ENCODE measurements at regions of chr15 and their contacts with region 1.

Region 1: GRCh38 chr15:67150028-67150860 is 84.8 kb downstream of the SMAD3 start:
- DNase-seq: peak; percentile 62 to 94
- H3K4me3 ChIP-seq: peak overlapping the region in 1 of 2 donors; percentile 22
- H3K27ac ChIP-seq: peak overlapping the region; percentile 86 to 89
- H3K4me1 ChIP-seq: peaks cover 18 to 49% of the 10 kb centered on the region in 2 donors
- H3K27me3 ChIP-seq: no peaks in the 10 kb centered on the region
- CTCF ChIP-seq: no peak

Region 2: GRCh38 chr15:66883322-66883911 is 266.8 kb before region 1 on chr15:
- intact Hi-C with region 1: loop called (anchors 2 kb)
- DNase-seq: peak; percentile 80 to 99
- H3K4me3 ChIP-seq: no peak overlapping the region
- H3K27ac ChIP-seq: peak overlapping the region; percentile 63 to 73
- H3K4me1 ChIP-seq: peaks cover 6 to 27% of the 10 kb centered on the region in 2 donors
- H3K27me3 ChIP-seq: no peaks in the 10 kb centered on the region
- CTCF ChIP-seq: no peak

Region 3: GRCh38 chr15:67065444-67066093 is 84.7 kb before region 1 on chr15 and contains the start of gene SMAD3:
- intact Hi-C with region 1: loop called (anchors 5 kb)
- DNase-seq: peak; percentile 57 to 94
- H3K4me3 ChIP-seq: peak within 1 kb of the TSS; percentile 85 to 94
- H3K27ac ChIP-seq: peak within 1 kb of the TSS; percentile 96
- H3K4me1 ChIP-seq: peaks cover 8 to 19% of the 10 kb centered on the region in 2 donors
- H3K27me3 ChIP-seq: no peaks in the 10 kb centered on the region
- CTCF ChIP-seq: no peak
- total RNA-seq, gene SMAD3: 89.3 TPM

Region 4: GRCh38 chr15:67080900-67081431 is 69.3 kb before region 1 on chr15:
- intact Hi-C with region 1: loop called (anchors 2 kb)
- DNase-seq: peak; percentile 39 to 83
- H3K4me3 ChIP-seq: peak overlapping the region in 1 of 2 donors; percentile 40
- H3K27ac ChIP-seq: peak overlapping the region; percentile 65 to 67
- H3K4me1 ChIP-seq: peaks cover 23 to 68% of the 10 kb centered on the region in 2 donors
- H3K27me3 ChIP-seq: no peaks in the 10 kb centered on the region
- CTCF ChIP-seq: no peak

Region 5: GRCh38 chr15:67120839-67121643 is 29.2 kb before region 1 on chr15:
- intact Hi-C with region 1: loop called (anchors 1 kb)
- DNase-seq: peak; percentile 93 to 96
- H3K4me3 ChIP-seq: peak overlapping the region; percentile 29 to 41
- H3K27ac ChIP-seq: peak overlapping the region; percentile 81 to 92
- H3K4me1 ChIP-seq: peaks cover 22 to 73% of the 10 kb centered on the region in 2 donors
- H3K27me3 ChIP-seq: no peaks in the 10 kb centered on the region
- CTCF ChIP-seq: no peak

Region 6: GRCh38 chr15:67165254-67166253 is 15.3 kb after region 1 on chr15:
- intact Hi-C with region 1: loop called (anchors 1 kb)
- DNase-seq: peak in 1 of 2 donors; percentile 84
- H3K4me3 ChIP-seq: peak overlapping the region in 1 of 2 donors; percentile 28
- H3K27ac ChIP-seq: peak overlapping the region; percentile 70 to 73
- H3K4me1 ChIP-seq: peaks cover 12 to 43% of the 10 kb centered on the region in 2 donors
- H3K27me3 ChIP-seq: no peaks in the 10 kb centered on the region
- CTCF ChIP-seq: no peak

Region 7: GRCh38 chr15:67188551-67189218 is 38.4 kb after region 1 on chr15:
- intact Hi-C with region 1: loop called (anchors 1 kb)
- DNase-seq: no peak
- H3K4me3 ChIP-seq: no peak overlapping the region
- H3K27ac ChIP-seq: peak overlapping the region; percentile 92 to 95
- H3K4me1 ChIP-seq: peaks cover 30 to 47% of the 10 kb centered on the region in 2 donors
- H3K27me3 ChIP-seq: no peaks in the 10 kb centered on the region
- CTCF ChIP-seq: no peak

Region 8: DNA sequence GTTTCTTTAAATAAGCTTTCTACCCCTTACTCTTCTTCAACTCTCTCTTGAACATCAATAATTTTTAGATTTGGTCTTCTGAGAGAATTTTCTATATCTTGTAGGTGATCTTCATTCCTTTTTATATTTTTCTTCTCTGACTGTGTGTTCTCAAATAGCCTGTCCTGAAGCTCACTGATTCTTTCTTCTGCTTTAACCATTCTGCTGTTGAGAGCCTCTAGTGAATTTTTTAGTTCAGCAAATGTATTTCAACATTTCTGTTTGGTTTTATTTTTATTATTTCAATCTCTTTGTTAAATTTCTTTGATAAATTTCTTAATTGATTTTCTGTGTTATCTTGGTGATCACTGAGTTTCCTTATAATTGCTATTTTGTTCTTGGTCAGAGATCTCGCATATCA is 124.0 kb after region 1 on chr15:
- intact Hi-C with region 1: no loop called
- DNase-seq: no peak
- H3K4me3 ChIP-seq: no peak overlapping the region
- H3K27ac ChIP-seq: no peak overlapping the region
- H3K4me1 ChIP-seq: no peaks in the 10 kb centered on the region
- H3K27me3 ChIP-seq: no peaks in the 10 kb centered on the region
- CTCF ChIP-seq: no peak

Measured in ascending aorta (tissue), 2 donors.